ENCODE measurements at regions of chr4 and their contacts with region 1.

Region 1: GRCh38 chr4:67684839-67685531 is 16.0 kb downstream of the UBA6 start:
- DNase-seq: no peak
- ATAC-seq: no peak
- H3K4me3 ChIP-seq: no peak overlapping the region
- H3K4me3 Mint-ChIP-seq: no peak overlapping the region
- H3K27ac ChIP-seq: no peak overlapping the region
- H3K27ac Mint-ChIP-seq: no peak overlapping the region
- H3K4me1 ChIP-seq: no peaks in the 10 kb centered on the region
- H3K4me1 Mint-ChIP-seq: peaks cover 30% of the 10 kb centered on the region
- H3K27me3 ChIP-seq: no peaks in the 10 kb centered on the region
- H3K27me3 Mint-ChIP-seq: no peaks in the 10 kb centered on the region
- CTCF ChIP-seq: no peak

Region 2: GRCh38 chr4:67651536-67651935 is 33.4 kb before region 1 on chr4:
- CTCF ChIA-PET with region 1: no interaction called
- POLR2A ChIA-PET with region 1: no interaction called
- intact Hi-C with region 1: loop called in 1 of 2 experiments (anchors 5 kb)
- DNase-seq: no peak
- ATAC-seq: no peak
- H3K4me3 ChIP-seq: no peak overlapping the region
- H3K4me3 Mint-ChIP-seq: no peak overlapping the region
- H3K27ac ChIP-seq: no peak overlapping the region
- H3K27ac Mint-ChIP-seq: no peak overlapping the region
- H3K4me1 ChIP-seq: no peaks in the 10 kb centered on the region
- H3K4me1 Mint-ChIP-seq: peaks cover 3% of the 10 kb centered on the region
- H3K27me3 ChIP-seq: no peaks in the 10 kb centered on the region
- H3K27me3 Mint-ChIP-seq: no peaks in the 10 kb centered on the region
- CTCF ChIP-seq: no peak

Measured in CD8-positive, alpha-beta T cell (primary cell).